Activated CD4-positive, alpha-beta T cell treated with anti-CD3 and anti-CD28 coated beads, Interleukin-2, amount 10 ng/mL, durations not matched to agents 24 days and 14 days (primary cell): ENCODE measurements at regions of chr1 and their contacts with region 1.

Region 1: DNA sequence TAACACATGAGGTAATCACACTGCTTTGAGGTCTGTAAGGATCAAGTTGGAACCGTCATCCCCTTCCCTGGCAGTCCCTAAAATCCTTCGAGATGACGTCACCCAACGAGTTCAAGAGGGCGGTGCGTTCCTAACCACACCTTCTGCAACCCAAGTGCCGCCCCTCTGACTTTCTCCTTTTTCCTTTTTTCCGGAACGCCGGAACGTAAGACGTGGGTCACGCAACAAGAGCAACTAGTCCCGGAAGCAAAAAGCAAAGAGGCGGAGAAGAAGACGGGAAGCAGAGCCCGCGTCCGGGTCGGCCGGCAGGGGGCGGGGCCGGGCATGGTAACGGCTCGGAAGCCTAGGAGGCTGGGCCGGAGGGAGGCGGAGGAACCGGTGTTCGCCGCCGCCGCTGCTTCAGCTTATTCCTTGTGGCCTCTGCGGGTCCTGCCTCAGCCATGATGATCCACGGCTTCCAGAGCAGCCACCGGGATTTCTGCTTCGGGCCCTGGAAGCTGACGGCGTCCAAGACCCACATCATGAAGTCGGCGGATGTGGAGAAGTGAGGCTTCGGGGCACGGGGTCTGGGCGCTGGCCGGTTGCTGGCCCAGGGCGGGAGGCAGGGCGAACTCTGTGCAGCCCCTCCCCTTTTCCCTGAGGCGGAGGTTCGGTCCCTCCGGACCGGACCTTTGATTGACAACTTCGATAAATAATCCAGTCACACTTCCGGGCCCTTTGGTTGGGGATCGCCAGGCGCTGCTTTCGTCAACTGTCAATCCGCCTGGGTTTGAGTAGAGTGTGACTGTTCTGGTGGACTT is at the start of gene TIPRL:
- DNase-seq: peak; percentile 98
- H3K4me3 Mint-ChIP-seq: no peak within 1 kb of the TSS
- H3K27ac Mint-ChIP-seq: no peak within 1 kb of the TSS
- H3K4me1 Mint-ChIP-seq: peaks cover 8% of the 10 kb centered on the region
- H3K27me3 Mint-ChIP-seq: peaks cover 6% of the 10 kb centered on the region
- total RNA-seq, gene TIPRL: 46.8 and 49.2 TPM in 2 replicates

Region 2: DNA sequence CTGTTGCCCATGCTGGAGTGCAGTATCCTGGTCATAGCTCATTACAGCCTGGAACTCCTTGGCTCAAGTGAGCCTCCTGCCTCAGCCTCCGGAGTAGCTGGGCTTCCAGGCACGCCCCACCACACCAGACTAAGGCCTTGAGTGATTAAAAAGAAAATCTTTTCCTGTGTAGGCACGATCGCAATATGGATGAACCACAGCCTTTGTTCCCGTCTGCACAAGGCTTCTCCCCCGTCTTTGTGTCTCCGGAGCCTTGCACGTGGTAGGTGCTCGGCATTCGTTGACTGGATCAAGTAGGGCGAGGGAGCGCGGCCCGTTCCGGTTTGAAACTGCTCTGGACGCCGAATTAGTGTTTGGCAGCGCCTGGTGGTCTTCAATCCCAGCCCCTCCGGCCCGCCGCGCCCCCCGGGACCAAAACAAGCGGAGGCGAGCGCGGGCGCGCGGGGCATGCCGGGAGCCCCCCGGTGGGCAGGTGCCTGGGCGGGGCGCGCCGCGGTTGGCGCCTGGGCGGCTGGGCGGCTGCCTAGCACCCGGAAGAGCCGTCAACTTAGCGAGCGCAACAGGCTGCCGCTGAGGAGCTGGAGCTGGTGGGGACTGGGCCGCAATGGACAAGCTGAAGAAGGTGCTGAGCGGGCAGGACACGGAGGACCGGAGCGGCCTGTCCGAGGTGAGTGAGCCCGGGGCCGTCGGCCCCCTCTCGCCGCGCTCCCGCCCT is 46.8 kb after region 1 on chr1 and contains the start of gene SFT2D2:
- intact Hi-C with region 1: loop called (anchors 1 kb)
- DNase-seq: peak; percentile 95
- H3K4me3 Mint-ChIP-seq: peak within 1 kb of the TSS; percentile 84
- H3K27ac Mint-ChIP-seq: peak within 1 kb of the TSS; percentile 95
- H3K4me1 Mint-ChIP-seq: peaks cover 50% of the 10 kb centered on the region
- H3K27me3 Mint-ChIP-seq: no peaks in the 10 kb centered on the region
- total RNA-seq, gene SFT2D2: 64.3 and 65.7 TPM in 2 replicates

Region 3: GRCh38 chr1:168321945-168322344 is 143.1 kb after region 1 on chr1:
- intact Hi-C with region 1: loop called (anchors 2 kb)
- DNase-seq: no peak
- H3K4me3 Mint-ChIP-seq: no peak overlapping the region
- H3K27ac Mint-ChIP-seq: no peak overlapping the region
- H3K4me1 Mint-ChIP-seq: peaks cover 20% of the 10 kb centered on the region
- H3K27me3 Mint-ChIP-seq: no peaks in the 10 kb centered on the region

Region 4: GRCh38 chr1:168335500-168335899 is 156.7 kb after region 1 on chr1:
- intact Hi-C with region 1: no loop called
- DNase-seq: no peak
- H3K4me3 Mint-ChIP-seq: no peak overlapping the region
- H3K27ac Mint-ChIP-seq: no peak overlapping the region
- H3K4me1 Mint-ChIP-seq: peaks cover 8% of the 10 kb centered on the region
- H3K27me3 Mint-ChIP-seq: peaks cover 2% of the 10 kb centered on the region